Activated CD4-positive, alpha-beta T cell treated with anti-CD3 and anti-CD28 coated beads for 36 hours (primary cell): ENCODE measurements at regions of chr14 and their contacts with region 1.

Region 1: DNA sequence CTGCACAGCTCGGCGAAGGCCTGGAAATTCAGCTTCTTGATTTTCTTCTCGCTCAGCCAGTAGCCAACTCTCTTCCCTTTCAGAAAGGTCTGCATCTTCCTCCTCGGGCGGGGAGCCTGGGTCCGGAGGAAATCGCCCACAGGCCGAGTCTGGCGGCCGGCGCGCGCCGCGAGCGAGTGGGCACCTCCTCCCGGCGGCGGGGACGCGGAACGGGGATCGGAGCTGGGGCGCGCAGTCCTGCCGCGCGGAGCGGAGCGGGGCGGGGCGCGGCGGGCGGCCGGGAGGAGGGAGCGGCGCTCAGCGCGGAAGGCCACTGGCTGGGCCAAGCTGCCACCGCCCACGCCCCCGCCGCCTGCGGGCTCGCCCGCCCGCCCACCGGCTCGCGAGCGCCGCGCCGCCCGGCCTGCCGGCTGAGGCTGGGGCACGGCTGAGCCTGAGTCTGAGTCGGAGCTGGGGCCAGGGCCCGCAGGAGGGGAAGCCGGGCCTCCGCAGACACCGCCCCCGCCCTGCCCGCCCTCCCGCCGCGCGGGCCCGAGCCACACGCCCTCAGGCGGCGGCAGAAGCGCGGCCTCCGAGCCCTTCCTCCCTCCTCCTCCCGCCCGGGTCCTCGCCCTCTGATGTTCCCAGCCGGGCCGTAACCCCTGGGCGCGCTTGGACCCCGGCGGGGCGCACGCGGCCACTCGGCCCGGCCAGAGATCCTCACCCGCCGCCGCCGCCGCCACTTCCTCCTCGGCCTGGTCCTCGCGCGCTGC is 480 bp downstream of the ITPK1 start:
- DNase-seq: peak; percentile 90
- ATAC-seq: peak; percentile 80
- H3K4me3 Mint-ChIP-seq: peak overlapping the region; percentile 78
- H3K27ac Mint-ChIP-seq: no peak overlapping the region
- H3K4me1 Mint-ChIP-seq: peaks cover 23% of the 10 kb centered on the region
- H3K27me3 Mint-ChIP-seq: peaks cover 2% of the 10 kb centered on the region

Region 2: GRCh38 chr14:92793709-92794546 is 321.3 kb before region 1 on chr14 and contains the start of gene GOLGA5:
- CTCF ChIA-PET with region 1: interaction called, 5 read pairs
- POLR2A ChIA-PET with region 1: no interaction called
- intact Hi-C with region 1: loop called in 1 of 2 experiments (anchors 1 kb)
- DNase-seq: peak; percentile 98
- ATAC-seq: peak; percentile 98
- H3K4me3 Mint-ChIP-seq: peak within 1 kb of the TSS; percentile 99
- H3K27ac Mint-ChIP-seq: peak within 1 kb of the TSS; percentile 96
- H3K4me1 Mint-ChIP-seq: peaks cover 40% of the 10 kb centered on the region
- H3K27me3 Mint-ChIP-seq: no peaks in the 10 kb centered on the region
- total RNA-seq, gene GOLGA5: 20.3 to 23.5 TPM

Region 3: GRCh38 chr14:93073910-93074769 is 41.1 kb before region 1 on chr14:
- CTCF ChIA-PET with region 1: no interaction called
- POLR2A ChIA-PET with region 1: no interaction called
- intact Hi-C with region 1: no loop called
- DNase-seq: no peak
- ATAC-seq: peak; percentile 16
- H3K4me3 Mint-ChIP-seq: no peak overlapping the region
- H3K27ac Mint-ChIP-seq: no peak overlapping the region
- H3K4me1 Mint-ChIP-seq: peaks cover 13% of the 10 kb centered on the region
- H3K27me3 Mint-ChIP-seq: no peaks in the 10 kb centered on the region

Region 4: DNA sequence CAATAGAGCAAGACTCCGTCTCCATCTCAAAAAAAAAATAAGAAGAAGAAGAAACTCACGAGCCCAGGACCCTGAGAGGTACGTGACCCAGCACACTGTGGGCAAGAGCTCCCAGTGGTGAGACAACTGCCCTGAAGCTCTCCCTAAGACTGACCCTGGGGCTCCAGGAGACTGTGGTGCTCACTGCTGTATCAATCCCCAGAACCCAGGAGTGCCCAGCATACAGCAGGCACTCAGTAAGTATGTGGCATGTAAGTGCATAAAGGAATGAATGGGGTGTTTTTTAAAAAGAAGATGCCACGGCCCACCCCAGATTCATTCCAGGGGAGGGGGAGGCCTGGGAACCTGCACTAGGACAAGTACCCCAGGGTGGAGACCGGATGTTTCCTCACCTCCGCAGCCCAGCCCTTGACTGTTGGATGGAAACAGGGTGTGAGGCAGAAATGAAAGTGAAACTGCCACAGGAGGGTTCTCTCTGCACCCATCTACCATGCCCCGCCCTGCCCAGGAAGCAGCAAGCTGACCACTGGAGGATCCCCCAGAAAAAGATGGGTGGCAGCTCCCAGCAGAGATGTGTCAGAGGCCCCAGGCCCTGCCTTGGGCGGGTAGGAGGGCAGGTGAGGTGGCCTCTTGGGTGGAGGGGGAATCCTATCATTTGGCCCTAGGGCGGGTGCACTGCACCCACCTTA is 11.7 kb before region 1 on chr14:
- CTCF ChIA-PET with region 1: interaction called, 18 read pairs
- POLR2A ChIA-PET with region 1: interaction called, 8 read pairs
- intact Hi-C with region 1: loop called in 1 of 2 experiments (anchors 1 kb)
- DNase-seq: peak; percentile 82
- ATAC-seq: peak; percentile 99
- H3K4me3 Mint-ChIP-seq: peak overlapping the region; percentile 43
- H3K27ac Mint-ChIP-seq: peak overlapping the region; percentile 84
- H3K4me1 Mint-ChIP-seq: peaks cover 17% of the 10 kb centered on the region
- H3K27me3 Mint-ChIP-seq: no peaks in the 10 kb centered on the region

Region 5: GRCh38 chr14:93137864-93138263 is 22.6 kb after region 1 on chr14:
- CTCF ChIA-PET with region 1: interaction called, 43 read pairs
- POLR2A ChIA-PET with region 1: no interaction called
- intact Hi-C with region 1: loop called (anchors 1 kb)
- DNase-seq: no peak
- ATAC-seq: no peak
- H3K4me3 Mint-ChIP-seq: no peak overlapping the region
- H3K27ac Mint-ChIP-seq: no peak overlapping the region
- H3K4me1 Mint-ChIP-seq: peaks cover 2% of the 10 kb centered on the region
- H3K27me3 Mint-ChIP-seq: no peaks in the 10 kb centered on the region

Region 6: DNA sequence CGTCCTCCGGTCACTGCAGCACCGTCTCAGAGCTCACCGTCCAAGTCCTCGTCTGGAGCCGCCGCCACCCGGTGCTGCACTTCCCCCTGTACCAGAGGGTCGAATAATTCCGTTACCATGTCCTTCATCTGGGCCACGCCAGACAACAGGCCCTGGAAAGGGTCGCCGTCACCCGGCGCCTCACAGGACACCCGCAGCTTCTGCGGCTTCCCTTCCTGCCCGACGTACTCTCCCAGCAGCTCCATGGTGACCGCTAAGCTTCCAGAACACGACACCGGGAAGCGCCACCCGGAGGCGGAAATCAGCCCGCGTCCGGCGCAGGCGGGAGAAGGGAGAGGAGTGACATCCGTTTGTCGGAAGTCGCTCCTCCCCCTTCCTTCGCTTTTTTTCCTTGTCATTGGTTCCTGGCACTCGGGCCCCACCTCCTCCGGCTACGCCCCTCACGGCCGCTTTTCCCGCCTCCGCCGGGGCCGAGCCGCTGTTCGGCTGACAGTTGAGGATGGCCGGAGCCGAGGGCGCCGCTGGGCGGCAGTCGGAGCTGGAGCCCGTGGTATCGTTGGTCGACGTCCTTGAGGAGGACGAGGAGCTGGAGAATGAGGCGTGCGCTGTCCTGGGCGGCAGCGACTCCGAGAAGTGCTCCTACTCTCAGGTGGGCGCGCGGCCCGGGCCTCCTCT is 91.7 kb after region 1 on chr14 and contains the starts of genes GON7 and UBR7:
- CTCF ChIA-PET with region 1: interaction called, 21 read pairs
- POLR2A ChIA-PET with region 1: interaction called, 3 read pairs
- intact Hi-C with region 1: loop called (anchors 1 kb)
- DNase-seq: peak; percentile 94
- ATAC-seq: peak; percentile 94
- H3K4me3 Mint-ChIP-seq: peak within 1 kb of the TSS; percentile 96
- H3K27ac Mint-ChIP-seq: peak within 1 kb of the TSS; percentile 97
- H3K4me1 Mint-ChIP-seq: peaks cover 35% of the 10 kb centered on the region
- H3K27me3 Mint-ChIP-seq: no peaks in the 10 kb centered on the region
- total RNA-seq, gene GON7: 9.9 to 12.9 TPM
- total RNA-seq, gene UBR7: 36.5 to 39.9 TPM

Region 7: DNA sequence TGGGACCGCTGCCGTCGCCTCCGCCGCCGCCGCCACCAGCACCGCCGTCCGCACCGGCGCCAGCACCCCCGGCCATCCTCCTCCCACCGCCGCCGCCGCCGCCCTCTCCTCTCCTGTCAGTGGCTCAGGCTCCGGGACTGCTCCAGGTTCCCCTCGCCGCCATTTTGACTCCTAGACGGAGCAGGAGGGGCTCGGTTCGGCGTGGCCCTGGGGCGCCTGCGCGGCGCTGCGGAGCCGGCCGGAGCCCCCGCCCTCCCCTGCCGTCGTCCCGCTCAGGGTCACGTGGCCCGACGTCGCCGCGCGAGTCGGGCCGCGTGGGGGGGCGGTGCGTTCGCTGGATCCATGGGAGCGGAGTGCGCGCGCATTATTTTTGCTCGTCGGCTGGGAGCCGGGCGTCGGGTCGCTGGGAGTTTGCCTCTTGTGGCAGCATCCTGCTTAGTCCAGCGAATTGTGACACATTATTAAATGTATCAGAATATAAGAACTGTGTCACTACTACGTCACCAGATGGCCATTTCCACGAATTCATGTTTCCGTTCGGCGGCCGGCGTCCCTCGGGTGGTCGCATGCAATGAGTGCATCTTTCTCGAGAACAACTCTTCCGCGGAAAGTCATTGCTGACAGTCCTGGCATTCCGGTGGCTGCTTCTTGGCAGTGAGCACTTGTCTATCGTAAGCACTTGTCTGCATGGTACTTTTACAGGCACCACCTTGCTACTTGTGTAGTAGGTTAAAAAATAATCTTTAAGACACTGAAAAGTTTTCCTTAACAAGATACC is 217.8 kb after region 1 on chr14 and contains the start of gene BTBD7:
- CTCF ChIA-PET with region 1: interaction called, 3 read pairs
- POLR2A ChIA-PET with region 1: no interaction called
- intact Hi-C with region 1: loop called (anchors 1 to 5 kb)
- DNase-seq: peak; percentile 97
- ATAC-seq: peak; percentile 94
- H3K4me3 Mint-ChIP-seq: peak within 1 kb of the TSS; percentile 90
- H3K27ac Mint-ChIP-seq: peak within 1 kb of the TSS; percentile 88
- H3K4me1 Mint-ChIP-seq: peaks cover 46% of the 10 kb centered on the region
- H3K27me3 Mint-ChIP-seq: no peaks in the 10 kb centered on the region
- total RNA-seq, gene BTBD7: 6.5 to 9.5 TPM

Region 8: DNA sequence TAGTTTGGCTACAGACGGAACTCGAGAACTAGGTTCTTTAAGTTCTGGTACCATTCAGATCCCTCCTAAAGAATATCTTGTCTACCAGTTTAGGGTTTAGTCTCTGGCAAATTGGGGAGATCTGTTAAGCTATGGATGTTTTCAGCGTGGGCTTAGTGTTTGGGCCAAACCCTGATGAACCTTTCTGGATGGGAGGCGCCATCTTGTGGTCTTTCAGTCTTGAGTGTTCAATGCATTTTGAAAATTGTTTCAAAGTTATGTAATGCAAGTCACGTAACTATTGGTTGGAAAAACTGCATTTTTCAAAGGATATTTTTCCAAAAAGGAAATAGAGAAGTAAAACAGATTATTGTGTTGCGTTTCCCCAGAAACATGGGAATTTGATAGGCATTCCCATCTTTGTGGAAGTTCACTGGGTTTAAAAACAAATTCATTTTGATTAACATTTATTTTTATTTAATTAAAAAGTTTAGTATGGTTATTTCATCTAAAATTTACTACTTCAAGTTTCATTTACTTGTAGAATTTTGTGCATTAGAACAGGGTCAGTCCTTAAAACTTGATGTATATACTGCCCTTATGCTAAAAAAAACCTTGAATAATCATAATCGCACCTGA is 504.0 kb after region 1 on chr14:
- CTCF ChIA-PET with region 1: interaction called, 6 read pairs
- POLR2A ChIA-PET with region 1: no interaction called
- intact Hi-C with region 1: loop called in 1 of 2 experiments (anchors 10 kb)
- DNase-seq: peak; percentile 53
- ATAC-seq: no peak
- H3K4me3 Mint-ChIP-seq: no peak overlapping the region
- H3K27ac Mint-ChIP-seq: no peak overlapping the region
- H3K4me1 Mint-ChIP-seq: no peaks in the 10 kb centered on the region
- H3K27me3 Mint-ChIP-seq: peaks cover 12% of the 10 kb centered on the region